ENCODE measurements at regions of chr21 and their contacts with region 1.

Region 1: DNA sequence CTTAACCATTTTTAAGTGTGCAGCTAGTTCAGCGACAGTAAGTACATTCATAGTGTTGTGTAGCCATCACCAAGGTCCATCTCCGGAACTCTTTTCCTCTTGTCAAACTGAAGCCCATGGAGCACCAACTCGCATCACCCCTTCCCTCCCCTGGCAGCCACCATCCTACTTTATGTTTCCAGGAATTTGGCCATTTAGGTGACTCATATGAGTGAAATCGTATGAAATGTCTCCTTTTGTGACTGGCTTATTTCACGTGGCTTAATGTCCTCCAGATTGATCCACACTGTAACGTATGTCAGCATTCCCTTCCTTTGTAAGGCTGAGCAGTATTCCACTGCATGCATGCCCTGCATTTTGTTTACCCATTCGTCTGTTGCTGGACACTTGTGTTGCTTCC is 2.5 kb downstream of the COL6A2 start:
- DNase-seq: peak in 1 of 2 donors; percentile 30
- ATAC-seq: no peak
- H3K4me3 ChIP-seq: peak overlapping the region; percentile 66
- H3K27ac ChIP-seq: no peak overlapping the region
- H3K4me1 ChIP-seq: no peaks in the 10 kb centered on the region
- H3K27me3 ChIP-seq: peaks cover 0 to 64% (median 13%) of the 10 kb centered on the region in 3 donors
- CTCF ChIP-seq: no peak

Region 2: GRCh38 chr21:44583089-44583799 is 1517.2 kb before region 1 on chr21:
- intact Hi-C with region 1: no loop called
- DNase-seq: no peak
- ATAC-seq: no peak
- H3K4me3 ChIP-seq: no peak overlapping the region
- H3K27ac ChIP-seq: no peak overlapping the region
- H3K4me1 ChIP-seq: no peaks in the 10 kb centered on the region
- H3K27me3 ChIP-seq: peaks cover 7 to 45% (median 13%) of the 10 kb centered on the region in 3 donors
- CTCF ChIP-seq: no peak

Region 3: DNA sequence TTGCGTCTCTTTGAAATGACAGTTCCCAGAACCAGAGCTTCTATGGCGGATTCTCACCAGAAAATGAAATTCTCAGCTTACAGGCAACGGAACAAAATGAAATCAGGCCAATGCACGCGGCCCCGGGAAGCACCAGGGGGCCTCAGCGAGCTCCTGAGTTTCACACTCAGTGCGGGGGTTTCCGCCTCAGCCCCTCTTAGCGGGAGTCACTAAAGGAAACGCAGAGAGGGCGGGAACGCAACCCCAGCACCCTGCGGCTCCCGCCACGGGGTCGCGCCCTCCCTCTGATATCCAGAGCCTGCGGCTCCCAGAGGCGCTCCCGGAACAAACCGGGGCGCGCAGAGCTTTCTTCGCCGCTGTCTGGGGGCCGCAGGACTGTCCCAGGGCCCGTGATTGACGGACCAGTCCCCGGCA is 126.8 kb before region 1 on chr21:
- intact Hi-C with region 1: loop called in 1 of 2 experiments (anchors 5 kb)
- DNase-seq: peak; percentile 84 to 88
- ATAC-seq: peak; percentile 34 to 61 (median 52)
- H3K4me3 ChIP-seq: peak overlapping the region; percentile 68
- H3K27ac ChIP-seq: peak overlapping the region; percentile 72
- H3K4me1 ChIP-seq: peaks cover 17% of the 10 kb centered on the region
- H3K27me3 ChIP-seq: peaks cover 0 to 40% (median 12%) of the 10 kb centered on the region in 3 donors
- CTCF ChIP-seq: peak; percentile 60

Region 4: DNA sequence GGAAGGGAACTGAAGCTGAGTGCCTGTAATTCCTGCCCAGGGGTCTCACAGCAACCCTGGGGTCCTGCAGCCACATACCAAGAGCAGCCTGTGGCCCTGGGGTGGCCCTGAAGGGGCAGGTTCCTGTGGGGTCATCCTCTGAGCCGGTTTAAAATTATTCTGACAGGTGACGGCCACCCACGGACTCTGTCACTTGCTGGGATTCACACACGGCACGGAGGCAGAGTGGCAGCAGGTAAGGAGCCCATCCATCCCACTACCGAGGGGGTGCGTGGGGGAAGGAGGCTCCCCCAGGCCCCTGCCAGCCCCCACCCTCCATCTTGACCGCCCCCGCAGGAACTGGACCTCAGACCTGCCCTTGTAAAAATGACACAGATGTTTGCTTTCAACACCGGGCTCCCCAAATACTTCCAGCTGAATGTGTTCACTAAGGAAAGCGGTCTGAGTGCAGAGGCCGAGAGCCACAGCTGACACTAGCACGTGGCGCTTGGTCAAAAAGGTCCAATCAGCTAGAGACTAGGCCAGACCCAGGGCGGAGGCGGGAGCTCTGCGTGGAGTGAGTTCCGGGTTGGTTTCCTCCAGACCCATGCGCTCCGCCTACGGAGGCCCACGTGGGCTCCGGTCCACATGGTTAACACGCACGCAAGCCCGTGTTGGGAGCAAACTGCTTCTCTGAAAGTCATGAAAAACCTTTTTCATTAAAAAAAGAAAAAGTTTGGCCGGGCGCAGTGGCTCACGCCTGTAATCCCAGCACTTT is 195.7 kb after region 1 on chr21:
- intact Hi-C with region 1: no loop called
- DNase-seq: peak; percentile 89 to 93
- ATAC-seq: peak; percentile 75 to 86 (median 86)
- H3K4me3 ChIP-seq: peak overlapping the region; percentile 28
- H3K27ac ChIP-seq: peak overlapping the region; percentile 70
- H3K4me1 ChIP-seq: peaks cover 15% of the 10 kb centered on the region
- H3K27me3 ChIP-seq: peaks cover 0 to 21% (median 2%) of the 10 kb centered on the region in 3 donors
- CTCF ChIP-seq: no peak

Measured in psoas muscle (tissue), 8 donors.